ENCODE measurements at regions of chr4 and their contacts with region 1.

Region 1: GRCh38 chr4:101037938-101038413 is 309.4 kb downstream of the PPP3CA start:
- DNase-seq: peak; percentile 23
- ATAC-seq: peak; percentile 67
- H3K4me3 Mint-ChIP-seq: no peak overlapping the region
- H3K27ac Mint-ChIP-seq: no peak overlapping the region
- H3K4me1 Mint-ChIP-seq: peaks cover 24% of the 10 kb centered on the region
- H3K27me3 Mint-ChIP-seq: no peaks in the 10 kb centered on the region

Region 2: GRCh38 chr4:100823066-100823992 is 214.6 kb before region 1 on chr4:
- CTCF ChIA-PET with region 1: no interaction called
- POLR2A ChIA-PET with region 1: no interaction called
- intact Hi-C with region 1: loop called in 1 of 2 experiments (anchors 10 kb)
- DNase-seq: peak; percentile 49
- ATAC-seq: peak; percentile 83
- H3K4me3 Mint-ChIP-seq: no peak overlapping the region
- H3K27ac Mint-ChIP-seq: peak overlapping the region; percentile 22
- H3K4me1 Mint-ChIP-seq: peaks cover 13% of the 10 kb centered on the region
- H3K27me3 Mint-ChIP-seq: peaks cover 2% of the 10 kb centered on the region

Region 3: GRCh38 chr4:100962698-100963097 is 75.3 kb before region 1 on chr4:
- CTCF ChIA-PET with region 1: no interaction called
- POLR2A ChIA-PET with region 1: no interaction called
- intact Hi-C with region 1: no loop called
- DNase-seq: peak; percentile 6
- ATAC-seq: peak; percentile 63
- H3K4me3 Mint-ChIP-seq: no peak overlapping the region
- H3K27ac Mint-ChIP-seq: no peak overlapping the region
- H3K4me1 Mint-ChIP-seq: peaks cover 3% of the 10 kb centered on the region
- H3K27me3 Mint-ChIP-seq: peaks cover 2% of the 10 kb centered on the region

Region 4: GRCh38 chr4:101020956-101021355 is 17.0 kb before region 1 on chr4:
- CTCF ChIA-PET with region 1: no interaction called
- POLR2A ChIA-PET with region 1: no interaction called
- intact Hi-C with region 1: loop called (anchors 1 kb)
- DNase-seq: no peak
- ATAC-seq: peak; percentile 70
- H3K4me3 Mint-ChIP-seq: no peak overlapping the region
- H3K27ac Mint-ChIP-seq: peak overlapping the region; percentile 64
- H3K4me1 Mint-ChIP-seq: peaks cover 50% of the 10 kb centered on the region
- H3K27me3 Mint-ChIP-seq: no peaks in the 10 kb centered on the region

Region 5: DNA sequence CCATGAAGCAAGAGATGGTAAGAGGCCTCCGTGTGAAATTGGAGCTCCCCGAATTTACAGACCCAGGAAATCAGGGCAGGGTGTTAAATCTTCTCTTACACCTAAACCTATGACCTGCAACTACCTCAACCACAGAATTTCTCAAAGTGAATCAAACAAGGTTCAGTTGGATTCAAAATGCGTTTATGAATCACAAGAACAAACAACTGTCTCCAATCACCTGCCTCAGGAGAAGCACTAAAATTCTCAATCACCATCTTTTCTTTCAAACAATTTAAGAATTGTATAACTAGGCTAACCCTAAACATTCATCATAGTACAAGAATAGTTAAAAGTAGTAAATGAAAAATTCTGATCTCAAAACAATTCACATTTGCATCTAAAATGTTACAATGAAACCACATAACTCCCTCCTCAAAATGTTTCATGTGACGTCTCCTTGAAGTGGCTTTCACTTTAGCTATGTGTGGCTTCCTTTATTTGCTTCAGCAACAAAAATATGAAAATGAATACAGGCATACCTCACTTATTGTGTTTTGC is 290.2 kb after region 1 on chr4:
- CTCF ChIA-PET with region 1: no interaction called
- POLR2A ChIA-PET with region 1: no interaction called
- intact Hi-C with region 1: loop called in 1 of 2 experiments (anchors 1 kb)
- DNase-seq: peak; percentile 27
- ATAC-seq: peak; percentile 90
- H3K4me3 Mint-ChIP-seq: peak overlapping the region; percentile 41
- H3K27ac Mint-ChIP-seq: peak overlapping the region; percentile 37
- H3K4me1 Mint-ChIP-seq: peaks cover 37% of the 10 kb centered on the region
- H3K27me3 Mint-ChIP-seq: peaks cover 24% of the 10 kb centered on the region